Kidney (tissue), 22 donors: ENCODE measurements at regions of chr15 and their contacts with region 1.

Region 1: DNA sequence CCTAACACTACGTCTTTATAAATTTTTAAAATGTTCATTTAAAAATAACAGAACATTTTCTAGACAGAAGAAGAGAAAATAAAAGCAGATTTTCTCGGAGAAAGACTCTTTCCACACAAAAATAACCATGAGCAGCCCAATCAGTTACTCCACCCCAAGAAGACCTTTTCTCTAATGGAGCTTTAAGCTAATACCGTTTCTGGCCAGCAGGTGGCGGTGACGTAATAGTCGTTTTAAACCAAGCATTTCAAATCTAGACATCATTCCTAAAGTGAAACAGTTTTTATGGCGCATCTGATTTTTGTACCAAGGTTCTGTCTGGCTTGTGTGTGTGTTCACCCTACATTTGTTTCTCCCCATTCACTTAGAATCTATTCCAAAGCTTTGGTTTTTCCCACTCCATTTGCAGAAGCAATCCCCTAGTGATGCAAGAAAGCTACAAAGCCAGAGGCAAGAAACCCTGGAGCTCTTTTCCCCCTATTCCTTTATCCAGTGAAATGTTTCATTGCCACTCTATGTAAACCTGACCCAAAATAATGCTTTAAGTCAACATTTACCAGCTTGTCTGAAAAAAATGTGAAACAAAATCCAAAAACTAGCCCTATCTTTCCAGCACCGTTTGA is 336.7 kb upstream of the IGF1R start:
- DNase-seq: peak in 4 of 5 donors; percentile 86 to 91 (median 88)
- H3K4me3 ChIP-seq: no peak overlapping the region
- H3K27ac ChIP-seq: no peak overlapping the region
- H3K4me1 ChIP-seq: no peaks in the 10 kb centered on the region
- H3K27me3 ChIP-seq: no peaks in the 10 kb centered on the region
- CTCF ChIP-seq: peak; percentile 85

Region 2: GRCh38 chr15:97909291-97909891 is 402.3 kb before region 1 on chr15:
- intact Hi-C with region 1: loop called (anchors 10 kb)
- DNase-seq: peak in 4 of 5 donors; percentile 71 to 83 (median 78)
- H3K4me3 ChIP-seq: no peak overlapping the region
- H3K27ac ChIP-seq: no peak overlapping the region
- H3K4me1 ChIP-seq: no peaks in the 10 kb centered on the region
- H3K27me3 ChIP-seq: peaks cover 2% of the 10 kb centered on the region
- CTCF ChIP-seq: peak; percentile 78

Region 3: GRCh38 chr15:98202256-98202655 is 109.4 kb before region 1 on chr15:
- intact Hi-C with region 1: no loop called
- DNase-seq: no peak
- H3K4me3 ChIP-seq: no peak overlapping the region
- H3K27ac ChIP-seq: no peak overlapping the region
- H3K4me1 ChIP-seq: no peaks in the 10 kb centered on the region
- H3K27me3 ChIP-seq: no peaks in the 10 kb centered on the region
- CTCF ChIP-seq: no peak

Region 4: GRCh38 chr15:98421419-98422129 is 109.9 kb after region 1 on chr15:
- intact Hi-C with region 1: loop called (anchors 5 kb)
- DNase-seq: peak; percentile 83 to 91 (median 86)
- H3K4me3 ChIP-seq: peak overlapping the region in 2 of 3 donors; percentile 26 to 39
- H3K27ac ChIP-seq: no peak overlapping the region
- H3K4me1 ChIP-seq: peaks cover 0 to 9% (median 8%) of the 10 kb centered on the region in 3 donors
- H3K27me3 ChIP-seq: no peaks in the 10 kb centered on the region
- CTCF ChIP-seq: peak; percentile 94